CD4-positive, alpha-beta memory T cell (primary cell): ENCODE measurements at regions of chr18 and their contacts with region 1.

Region 1: GRCh38 chr18:74081966-74082741 is 65.5 kb downstream of the FBXO15 start:
- DNase-seq: peak; percentile 45 to 59 (median 59)
- H3K4me3 ChIP-seq: peak overlapping the region in 1 of 2 donors; percentile 15
- H3K4me3 Mint-ChIP-seq: peak overlapping the region; percentile 78 to 90 (median 84)
- H3K27ac ChIP-seq: peak overlapping the region; percentile 6
- H3K27ac Mint-ChIP-seq: peak overlapping the region; percentile 64 to 98 (median 90)
- H3K4me1 ChIP-seq: peaks cover 10% of the 10 kb centered on the region
- H3K4me1 Mint-ChIP-seq: peaks cover 10 to 16% (median 13%) of the 10 kb centered on the region in 4 donors
- H3K27me3 ChIP-seq: no peaks in the 10 kb centered on the region
- H3K27me3 Mint-ChIP-seq: no peaks in the 10 kb centered on the region

Region 2: DNA sequence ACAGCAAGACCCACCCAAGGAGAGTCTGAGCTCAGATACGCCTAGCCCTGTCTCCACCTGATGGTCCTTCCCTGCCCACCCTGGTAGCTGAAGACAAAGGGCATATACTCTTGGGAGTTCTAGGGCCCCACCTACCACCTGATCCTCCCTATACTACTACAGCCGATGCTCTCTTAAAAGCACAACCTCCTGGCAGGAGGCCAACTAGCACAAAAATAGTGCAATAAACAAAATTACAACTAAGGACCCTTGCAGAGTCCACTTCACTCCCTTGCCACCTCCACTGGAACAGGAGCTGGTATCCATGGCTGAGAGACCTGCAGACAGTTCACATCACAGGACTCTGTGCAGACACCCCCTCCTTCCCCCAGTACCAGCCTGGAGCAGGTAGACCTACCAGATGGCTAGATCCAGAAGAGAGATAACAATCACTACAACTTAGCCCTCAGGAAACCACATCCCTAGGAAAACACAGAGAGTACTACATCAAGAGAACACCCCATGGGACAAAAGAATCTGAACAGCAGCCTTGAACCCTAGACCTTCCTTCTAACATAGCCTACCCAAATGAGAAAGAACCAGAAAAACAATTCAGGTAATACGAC is 15.5 kb after region 1 on chr18:
- CTCF ChIA-PET with region 1: no interaction called
- POLR2A ChIA-PET with region 1: no interaction called
- intact Hi-C with region 1: no loop called
- DNase-seq: no peak
- H3K4me3 ChIP-seq: no peak overlapping the region
- H3K4me3 Mint-ChIP-seq: no peak overlapping the region
- H3K27ac ChIP-seq: no peak overlapping the region
- H3K27ac Mint-ChIP-seq: no peak overlapping the region
- H3K4me1 ChIP-seq: no peaks in the 10 kb centered on the region
- H3K4me1 Mint-ChIP-seq: no peaks in the 10 kb centered on the region
- H3K27me3 ChIP-seq: no peaks in the 10 kb centered on the region
- H3K27me3 Mint-ChIP-seq: peaks cover 6 to 7% of the 10 kb centered on the region in 2 donors

Region 3: DNA sequence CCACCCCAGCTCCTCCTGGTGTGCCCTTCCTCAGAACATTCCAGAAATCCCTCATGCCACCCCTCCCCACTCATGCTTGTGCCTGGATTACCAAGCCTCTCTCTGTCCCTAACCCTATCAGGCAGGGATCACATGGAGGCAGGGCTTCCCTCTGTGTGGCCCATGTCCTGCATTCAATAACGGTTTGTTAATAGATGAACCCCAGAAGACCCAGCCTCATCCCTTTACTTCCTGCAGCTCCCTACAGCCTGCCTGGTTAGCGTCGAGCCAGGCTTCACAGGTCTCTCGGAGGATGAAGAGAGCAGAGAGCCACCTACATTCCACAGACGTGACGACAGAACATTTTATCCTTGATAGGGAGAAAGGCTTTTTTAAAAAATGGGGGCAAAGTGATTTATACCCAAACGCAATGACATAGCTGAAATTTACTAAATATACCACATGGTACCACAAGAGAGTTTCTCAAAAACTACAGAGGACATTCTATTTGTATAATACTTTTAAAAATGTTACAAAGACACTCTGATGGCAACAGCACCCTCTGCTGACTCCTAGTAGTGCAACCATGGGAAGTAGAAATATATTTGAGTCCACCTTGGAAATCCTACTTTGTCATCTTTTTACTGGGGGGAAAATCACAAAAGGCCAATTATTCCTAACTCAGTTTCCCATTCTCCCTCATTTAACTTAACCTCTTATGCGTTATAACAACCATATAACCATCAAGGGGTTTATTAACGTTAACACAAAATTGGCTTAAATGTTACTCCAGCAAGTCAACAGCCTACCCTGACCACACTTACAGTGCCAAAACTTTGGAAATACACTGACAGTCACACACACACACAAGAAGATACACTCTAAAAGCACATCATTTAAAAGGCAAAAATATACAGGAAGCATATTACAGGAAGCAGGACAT is 34.7 kb after region 1 on chr18:
- CTCF ChIA-PET with region 1: interaction called, 4 read pairs
- POLR2A ChIA-PET with region 1: no interaction called
- intact Hi-C with region 1: loop called (anchors 5 kb)
- DNase-seq: peak in 1 of 5 donors; percentile 18
- H3K4me3 ChIP-seq: no peak overlapping the region
- H3K4me3 Mint-ChIP-seq: no peak overlapping the region
- H3K27ac ChIP-seq: no peak overlapping the region
- H3K27ac Mint-ChIP-seq: no peak overlapping the region
- H3K4me1 ChIP-seq: no peaks in the 10 kb centered on the region
- H3K4me1 Mint-ChIP-seq: no peaks in the 10 kb centered on the region
- H3K27me3 ChIP-seq: no peaks in the 10 kb centered on the region
- H3K27me3 Mint-ChIP-seq: peaks cover 2 to 5% of the 10 kb centered on the region in 2 donors

Region 4: GRCh38 chr18:74342416-74343043 is 260.4 kb after region 1 on chr18:
- CTCF ChIA-PET with region 1: interaction called, 13 read pairs
- POLR2A ChIA-PET with region 1: no interaction called
- intact Hi-C with region 1: loop called (anchors 5 kb)
- DNase-seq: peak; percentile 25 to 47 (median 42)
- H3K4me3 ChIP-seq: no peak overlapping the region
- H3K4me3 Mint-ChIP-seq: no peak overlapping the region
- H3K27ac ChIP-seq: no peak overlapping the region
- H3K27ac Mint-ChIP-seq: no peak overlapping the region
- H3K4me1 ChIP-seq: no peaks in the 10 kb centered on the region
- H3K4me1 Mint-ChIP-seq: no peaks in the 10 kb centered on the region
- H3K27me3 ChIP-seq: no peaks in the 10 kb centered on the region
- H3K27me3 Mint-ChIP-seq: peaks cover 3 to 4% of the 10 kb centered on the region in 2 donors